HCT116 (cell line): ENCODE measurements at regions of chr11 and their contacts with region 1.

Region 1: GRCh38 chr11:75214411-75214821 is 26.2 kb upstream of the TPBGL start:
- DNase-seq: peak; percentile 48
- ATAC-seq: peak; percentile 97
- H3K4me3 ChIP-seq: no peak overlapping the region
- H3K27ac ChIP-seq: no peak overlapping the region
- H3K4me1 ChIP-seq: no peaks in the 10 kb centered on the region
- H3K27me3 ChIP-seq: peaks cover 38% of the 10 kb centered on the region; the same call in 1 of the 2 replicates
- CTCF ChIP-seq: peak; percentile 35 to 57 (median 40); a peak in 5 of 6 replicates
- POLR2A ChIP-seq: no peak
- RAD21 ChIP-seq: peak; percentile 18; the same call in 1 of the 2 replicates

Region 2: GRCh38 chr11:75233742-75234172 is 19.3 kb after region 1 on chr11:
- CTCF ChIA-PET with region 1: interaction called, 4 read pairs
- POLR2A ChIA-PET with region 1: no interaction called
- RAD21 ChIA-PET with region 1: no interaction called
- intact Hi-C with region 1: loop called (anchors 1 kb)
- DNase-seq: no peak
- ATAC-seq: no peak
- H3K4me3 ChIP-seq: no peak overlapping the region
- H3K27ac ChIP-seq: no peak overlapping the region
- H3K4me1 ChIP-seq: no peaks in the 10 kb centered on the region
- H3K27me3 ChIP-seq: peaks cover 7% of the 10 kb centered on the region; the same call in 1 of the 2 replicates
- CTCF ChIP-seq: no peak
- POLR2A ChIP-seq: no peak
- RAD21 ChIP-seq: no peak

Region 3: GRCh38 chr11:75554258-75555022 is 340.0 kb after region 1 on chr11:
- CTCF ChIA-PET with region 1: no interaction called
- POLR2A ChIA-PET with region 1: no interaction called
- RAD21 ChIA-PET with region 1: no interaction called
- intact Hi-C with region 1: no loop called
- DNase-seq: no peak
- ATAC-seq: no peak; the same call in 1 of the 2 replicates
- H3K4me3 ChIP-seq: no peak overlapping the region
- H3K27ac ChIP-seq: no peak overlapping the region
- H3K4me1 ChIP-seq: peaks cover 0 to 21% of the 10 kb centered on the region in 2 experiments; a peak in 2 of 4 replicates
- H3K27me3 ChIP-seq: no peaks in the 10 kb centered on the region
- CTCF ChIP-seq: no peak
- POLR2A ChIP-seq: no peak
- RAD21 ChIP-seq: no peak

Region 4: DNA sequence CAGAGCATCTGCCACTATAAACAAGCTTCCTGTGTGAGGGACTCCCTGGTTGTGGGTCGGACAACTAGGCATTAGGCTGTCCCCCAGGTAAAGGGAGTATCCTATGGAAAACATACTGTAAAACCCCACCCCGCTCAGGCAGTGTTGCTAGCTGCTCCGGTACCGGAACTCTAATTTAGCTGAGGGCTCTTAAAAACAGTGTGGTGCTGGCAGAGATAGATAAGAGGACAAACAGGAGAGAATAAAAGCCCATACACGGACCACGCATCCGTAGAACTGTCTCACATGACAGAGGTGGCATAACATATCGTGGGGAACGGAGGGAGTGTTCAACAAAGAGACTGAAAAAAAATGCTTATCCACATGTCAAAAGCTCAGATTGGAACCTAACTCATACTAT is 499.8 kb after region 1 on chr11:
- CTCF ChIA-PET with region 1: no interaction called
- POLR2A ChIA-PET with region 1: no interaction called
- RAD21 ChIA-PET with region 1: no interaction called
- intact Hi-C with region 1: no loop called
- DNase-seq: no peak
- ATAC-seq: no peak
- H3K4me3 ChIP-seq: no peak overlapping the region
- H3K27ac ChIP-seq: no peak overlapping the region
- H3K4me1 ChIP-seq: peaks cover 0 to 4% of the 10 kb centered on the region in 2 experiments; a peak in 1 of 4 replicates
- H3K27me3 ChIP-seq: no peaks in the 10 kb centered on the region
- CTCF ChIP-seq: no peak
- POLR2A ChIP-seq: no peak
- RAD21 ChIP-seq: no peak